Right cardiac atrium (tissue), 5 donors: ENCODE measurements at regions of chr6 and their contacts with region 1.

Region 1: GRCh38 chr6:107691062-107691751 is 132.9 kb downstream of the SCML4 start:
- DNase-seq: peak in 1 of 3 donors; percentile 40
- ATAC-seq: no peak
- H3K4me3 ChIP-seq: no peak overlapping the region
- H3K27ac ChIP-seq: no peak overlapping the region
- H3K4me1 ChIP-seq: no peaks in the 10 kb centered on the region
- H3K27me3 ChIP-seq: no peaks in the 10 kb centered on the region

Region 2: DNA sequence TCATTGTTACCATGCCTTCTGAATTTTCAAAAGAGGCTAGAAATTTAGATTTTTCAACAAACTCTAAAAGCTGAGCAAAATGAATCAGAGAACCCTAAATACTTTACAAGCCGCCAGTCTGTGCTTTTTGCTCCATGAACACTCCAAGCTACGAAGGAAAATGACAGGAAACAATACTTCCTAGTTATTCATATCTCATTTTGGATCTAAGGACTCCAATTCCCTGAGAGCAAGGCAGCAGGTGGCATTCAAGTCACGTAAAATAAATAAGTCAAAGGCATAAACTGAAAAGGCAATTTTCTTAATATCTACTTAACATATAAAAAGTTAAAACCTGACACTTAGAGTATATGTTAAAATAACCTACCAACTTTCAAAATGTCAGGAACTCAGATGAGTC is 282.5 kb before region 1 on chr6:
- intact Hi-C with region 1: no loop called
- DNase-seq: no peak
- ATAC-seq: no peak
- H3K4me3 ChIP-seq: no peak overlapping the region
- H3K27ac ChIP-seq: no peak overlapping the region
- H3K4me1 ChIP-seq: peaks cover 2% of the 10 kb centered on the region
- H3K27me3 ChIP-seq: no peaks in the 10 kb centered on the region

Region 3: GRCh38 chr6:107832151-107833056 is 141.2 kb after region 1 on chr6:
- intact Hi-C with region 1: loop called in 1 of 4 experiments (anchors 10 kb)
- DNase-seq: no peak
- ATAC-seq: no peak
- H3K4me3 ChIP-seq: no peak overlapping the region
- H3K27ac ChIP-seq: no peak overlapping the region
- H3K4me1 ChIP-seq: no peaks in the 10 kb centered on the region
- H3K27me3 ChIP-seq: no peaks in the 10 kb centered on the region